ENCODE measurements at regions of chr12 and their contacts with region 1.

Region 1: GRCh38 chr12:128914908-128915563 is 61.8 kb downstream of the GLT1D1 start:
- DNase-seq: peak; percentile 55
- H3K4me3 Mint-ChIP-seq: peak overlapping the region; percentile 30
- H3K27ac Mint-ChIP-seq: peak overlapping the region; percentile 68
- H3K4me1 Mint-ChIP-seq: peaks cover 46% of the 10 kb centered on the region
- H3K27me3 Mint-ChIP-seq: peaks cover 6% of the 10 kb centered on the region

Region 2: DNA sequence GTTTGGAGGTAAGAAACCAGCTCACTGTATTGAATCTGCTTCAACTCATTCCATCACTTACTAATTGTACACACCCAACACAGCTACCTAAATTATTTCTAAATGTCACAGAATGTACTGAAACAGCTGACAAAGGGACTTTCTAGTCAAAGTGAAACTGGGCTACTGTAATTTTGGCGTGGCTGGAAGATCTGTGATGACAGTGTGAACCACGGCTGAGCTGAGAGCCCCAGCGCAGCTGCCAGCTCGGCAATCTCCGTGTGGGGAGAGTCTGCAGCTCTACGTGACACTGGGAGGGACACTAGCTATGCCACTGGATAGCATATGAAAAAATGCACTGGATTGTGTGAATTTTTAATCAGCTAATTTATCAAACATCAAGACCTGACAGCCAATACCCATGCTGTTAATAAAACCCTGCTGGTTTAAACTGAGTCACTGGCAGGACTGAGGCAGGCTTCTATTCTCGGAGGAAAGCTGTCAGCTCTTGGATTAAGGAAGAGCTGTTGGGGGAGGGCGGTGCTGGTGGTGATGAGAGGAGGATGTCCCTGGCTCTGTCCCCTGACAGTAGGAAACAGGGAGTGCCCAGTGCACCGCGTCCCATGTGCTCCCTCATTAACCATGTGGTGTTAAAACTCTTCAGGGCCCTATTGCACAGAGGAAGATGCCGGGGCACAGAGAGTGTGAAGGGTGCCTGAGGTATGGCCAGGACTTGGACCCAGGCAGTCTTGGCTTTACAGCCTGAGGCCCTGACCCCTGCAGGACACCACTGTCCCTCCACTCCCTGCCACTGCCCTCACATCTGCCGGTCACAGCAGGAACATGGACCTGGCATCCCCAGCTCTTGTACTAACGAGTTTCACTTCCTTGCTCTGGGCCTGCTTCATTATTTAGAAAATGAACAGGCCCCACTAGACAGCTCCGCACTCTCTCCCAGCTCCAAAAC is 104.6 kb before region 1 on chr12:
- intact Hi-C with region 1: loop called (anchors 1 kb)
- DNase-seq: peak; percentile 48
- H3K4me3 Mint-ChIP-seq: peak overlapping the region; percentile 45
- H3K27ac Mint-ChIP-seq: peak overlapping the region; percentile 90
- H3K4me1 Mint-ChIP-seq: peaks cover 46% of the 10 kb centered on the region
- H3K27me3 Mint-ChIP-seq: no peaks in the 10 kb centered on the region

Region 3: DNA sequence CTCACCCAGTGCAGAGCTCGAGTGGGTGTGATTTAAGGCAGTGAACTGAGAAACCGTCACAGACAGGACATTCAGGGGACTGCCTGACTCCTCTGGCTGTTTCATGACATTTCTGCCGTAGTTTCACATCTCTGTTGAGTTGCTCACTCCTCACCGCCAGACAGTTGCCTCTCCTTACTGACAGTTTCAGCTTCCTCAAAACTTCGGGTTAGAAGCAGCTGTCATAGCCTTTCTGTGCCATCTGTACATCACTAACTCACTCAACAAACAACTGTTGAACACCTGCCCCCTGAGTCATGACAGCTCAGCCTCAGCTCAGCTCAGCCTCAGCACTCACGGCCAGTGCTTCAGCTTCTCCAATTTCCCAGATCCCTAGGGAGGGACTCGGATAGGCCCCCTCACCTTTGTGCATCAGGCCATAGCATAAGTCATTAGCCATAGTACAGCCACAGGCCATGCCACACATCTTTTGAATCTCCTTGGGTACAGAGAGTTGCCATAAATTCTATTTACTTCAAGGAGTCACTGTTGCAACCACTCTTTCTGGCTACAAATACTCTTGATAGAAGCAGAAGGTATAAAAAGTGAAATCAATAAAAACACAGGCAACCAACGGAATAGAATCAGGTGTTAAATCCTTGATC is 85.1 kb before region 1 on chr12:
- intact Hi-C with region 1: loop called (anchors 1 kb)
- DNase-seq: peak; percentile 38
- H3K4me3 Mint-ChIP-seq: peak overlapping the region; percentile 67
- H3K27ac Mint-ChIP-seq: peak overlapping the region; percentile 84
- H3K4me1 Mint-ChIP-seq: peaks cover 26% of the 10 kb centered on the region
- H3K27me3 Mint-ChIP-seq: no peaks in the 10 kb centered on the region